ENCODE measurements at regions of chr7 and their contacts with region 1.

Region 1: GRCh38 chr7:43729214-43729923 is at the start of gene COA1:
- DNase-seq: peak; percentile 82
- ATAC-seq: peak; percentile 99
- H3K4me3 ChIP-seq: peak within 1 kb of the TSS; percentile 89 to 98 (median 95)
- H3K27ac ChIP-seq: peak within 1 kb of the TSS; percentile 89
- H3K4me1 ChIP-seq: peaks cover 28% of the 10 kb centered on the region
- H3K27me3 ChIP-seq: no peaks in the 10 kb centered on the region; a peak in 1 of 5 replicates
- CTCF ChIP-seq: no peak
- EP300 ChIP-seq: 0 out of 4 replicates have a peak, but pooled peaks of 1 of the 2 experiments have one; percentile 30
- POLR2A ChIP-seq: peak; percentile 84 to 86
- RAD21 ChIP-seq: peak; percentile 49; the same call in 1 of the 2 replicates
- total RNA-seq, gene COA1: 65.7 and 73.8 TPM in 2 replicates

Region 2: DNA sequence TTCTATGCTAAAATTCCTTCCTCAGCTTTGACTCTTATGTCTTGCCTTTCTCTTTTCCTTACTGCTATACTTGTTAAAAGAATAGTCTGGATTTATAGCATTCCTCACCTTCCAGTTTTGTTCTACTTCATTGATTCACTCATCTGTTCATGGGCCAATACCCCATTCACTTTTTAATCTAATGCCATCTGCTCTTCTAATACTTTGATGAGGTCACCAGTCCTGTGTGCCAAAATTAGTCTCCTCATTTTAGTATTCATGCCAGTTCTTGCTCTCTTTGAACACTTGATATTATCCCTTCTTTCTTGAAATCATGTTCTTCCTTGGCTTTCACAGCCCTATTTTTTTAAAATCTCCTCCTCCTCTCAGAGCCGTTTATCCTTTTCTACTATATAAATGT is 127.1 kb before region 1 on chr7:
- CTCF ChIA-PET with region 1: no interaction called
- POLR2A ChIA-PET with region 1: no interaction called
- in situ Hi-C with region 1: no loop called
- intact Hi-C with region 1: no loop called
- DNase-seq: no peak
- ATAC-seq: no peak
- H3K4me3 ChIP-seq: no peak overlapping the region
- H3K27ac ChIP-seq: no peak overlapping the region
- H3K4me1 ChIP-seq: no peaks in the 10 kb centered on the region
- H3K27me3 ChIP-seq: no peaks in the 10 kb centered on the region
- CTCF ChIP-seq: no peak
- EP300 ChIP-seq: no peak
- POLR2A ChIP-seq: no peak
- RAD21 ChIP-seq: no peak

Region 3: DNA sequence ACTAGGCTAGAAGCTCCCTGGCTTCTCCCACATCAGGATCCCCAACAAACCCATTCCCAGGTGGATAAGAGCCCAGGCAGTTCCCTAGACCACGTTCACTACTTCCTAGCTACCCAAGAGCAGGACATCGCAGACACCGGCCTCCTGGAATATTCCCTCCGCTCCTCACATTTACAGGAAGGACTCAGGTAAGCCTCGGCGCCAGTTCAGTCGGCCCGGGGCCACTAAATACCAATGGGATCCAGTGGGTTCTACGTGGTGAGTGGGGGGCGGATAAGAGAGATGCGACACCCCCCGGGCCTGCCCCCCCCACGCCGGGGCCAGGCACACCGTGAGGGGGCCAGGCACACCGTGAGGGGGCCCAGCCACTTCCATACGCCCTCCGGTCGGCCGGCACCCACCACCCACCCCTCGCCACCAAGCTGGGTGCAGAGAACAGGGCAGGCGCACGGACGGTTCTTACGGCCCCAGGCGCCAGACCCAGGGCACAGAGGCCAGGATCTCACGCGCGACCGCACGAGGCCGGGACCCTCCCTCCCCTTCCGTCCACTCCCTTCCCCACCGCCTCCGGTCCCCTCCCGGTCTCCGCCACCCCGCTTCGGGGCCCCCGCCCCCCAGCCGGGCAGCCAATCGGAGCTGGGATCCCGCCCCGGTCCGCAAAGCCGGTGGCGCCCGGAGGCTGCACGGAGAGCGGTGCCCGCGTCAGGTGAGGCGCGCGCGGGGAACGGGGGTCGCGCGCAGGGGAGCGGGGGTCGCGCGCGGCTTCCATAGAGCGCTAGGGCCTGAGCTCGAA is 28.9 kb after region 1 on chr7 and contains the start of gene BLVRA:
- CTCF ChIA-PET with region 1: no interaction called
- POLR2A ChIA-PET with region 1: interaction called, 11 read pairs
- in situ Hi-C with region 1: no loop called
- intact Hi-C with region 1: loop called (anchors 2 kb)
- DNase-seq: peak; percentile 37
- ATAC-seq: peak; percentile 88
- H3K4me3 ChIP-seq: peak within 1 kb of the TSS; percentile 75 to 91 (median 82)
- H3K27ac ChIP-seq: peak within 1 kb of the TSS; percentile 60
- H3K4me1 ChIP-seq: peaks cover 58% of the 10 kb centered on the region
- H3K27me3 ChIP-seq: no peaks in the 10 kb centered on the region; a peak in 1 of 5 replicates
- CTCF ChIP-seq: no peak
- EP300 ChIP-seq: no peak
- POLR2A ChIP-seq: peak; percentile 20 to 87; a peak in 2 of 4 replicates
- RAD21 ChIP-seq: no peak
- total RNA-seq, gene BLVRA: 64.2 and 95.5 TPM in 2 replicates

Region 4: GRCh38 chr7:43764039-43764761 is 34.8 kb after region 1 on chr7:
- CTCF ChIA-PET with region 1: no interaction called
- POLR2A ChIA-PET with region 1: interaction called, 17 read pairs
- in situ Hi-C with region 1: no loop called
- intact Hi-C with region 1: loop called (anchors 2 kb)
- DNase-seq: peak; percentile 58
- ATAC-seq: peak; percentile 70
- H3K4me3 ChIP-seq: peak overlapping the region in 2 of 3 experiments; percentile 45 to 47; a peak in 4 of 6 replicates
- H3K27ac ChIP-seq: peak overlapping the region; percentile 82
- H3K4me1 ChIP-seq: peaks cover 96% of the 10 kb centered on the region
- H3K27me3 ChIP-seq: no peaks in the 10 kb centered on the region; a peak in 1 of 5 replicates
- CTCF ChIP-seq: no peak
- EP300 ChIP-seq: no peak
- POLR2A ChIP-seq: no peak
- RAD21 ChIP-seq: no peak

Region 5: DNA sequence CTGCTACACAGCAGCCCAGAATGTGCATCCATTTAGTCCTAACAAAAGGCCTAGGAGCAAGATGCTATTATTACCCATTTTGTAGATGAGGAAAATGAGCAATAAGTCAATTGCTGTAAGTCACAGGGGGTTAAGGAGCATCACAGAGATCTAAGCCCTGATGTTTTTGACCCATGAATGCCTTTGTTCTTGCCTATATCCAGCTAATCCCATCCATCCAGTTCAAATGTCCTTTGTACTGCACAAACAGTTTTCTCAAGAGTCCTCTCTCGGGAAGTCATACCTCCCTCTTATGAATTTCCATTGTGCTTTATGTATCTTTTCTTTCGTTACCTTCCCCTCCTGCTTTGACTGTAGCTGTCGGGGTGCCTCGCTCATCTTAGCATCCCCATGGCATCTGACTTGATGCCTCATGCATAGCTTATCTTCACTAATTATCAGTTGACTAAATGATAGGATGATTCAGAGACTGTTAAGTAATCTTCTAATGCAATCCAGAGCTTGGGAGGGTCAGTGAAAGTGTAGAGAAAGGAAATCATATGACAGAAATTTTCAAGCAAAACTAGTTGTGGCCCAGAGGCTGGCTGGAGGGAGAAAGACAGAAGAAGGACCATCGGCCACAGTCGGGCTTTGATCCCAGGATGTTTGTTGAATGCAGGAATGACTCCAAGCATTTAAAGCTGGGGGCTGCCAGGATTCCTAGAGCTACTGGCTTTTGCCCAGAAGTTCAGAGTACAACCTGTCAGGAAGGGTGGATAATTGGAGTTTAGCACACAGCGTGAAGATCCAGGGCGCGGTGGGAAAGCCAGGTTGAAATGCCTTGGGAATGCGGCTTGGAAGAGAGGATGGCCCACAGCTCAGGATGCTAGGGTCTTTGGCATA is 52.6 kb after region 1 on chr7:
- CTCF ChIA-PET with region 1: no interaction called
- POLR2A ChIA-PET with region 1: interaction called, 10 read pairs
- in situ Hi-C with region 1: no loop called
- intact Hi-C with region 1: loop called (anchors 1 kb)
- DNase-seq: peak; percentile 90
- ATAC-seq: peak; percentile 92
- H3K4me3 ChIP-seq: peak overlapping the region in 2 of 3 experiments; percentile 4 to 18; a peak in 3 of 6 replicates
- H3K27ac ChIP-seq: peak overlapping the region; percentile 71
- H3K4me1 ChIP-seq: peaks cover 64% of the 10 kb centered on the region
- H3K27me3 ChIP-seq: no peaks in the 10 kb centered on the region
- CTCF ChIP-seq: no peak
- EP300 ChIP-seq: peak; percentile 61 to 85; a peak in 3 of 4 replicates
- POLR2A ChIP-seq: no peak
- RAD21 ChIP-seq: no peak

Region 6: DNA sequence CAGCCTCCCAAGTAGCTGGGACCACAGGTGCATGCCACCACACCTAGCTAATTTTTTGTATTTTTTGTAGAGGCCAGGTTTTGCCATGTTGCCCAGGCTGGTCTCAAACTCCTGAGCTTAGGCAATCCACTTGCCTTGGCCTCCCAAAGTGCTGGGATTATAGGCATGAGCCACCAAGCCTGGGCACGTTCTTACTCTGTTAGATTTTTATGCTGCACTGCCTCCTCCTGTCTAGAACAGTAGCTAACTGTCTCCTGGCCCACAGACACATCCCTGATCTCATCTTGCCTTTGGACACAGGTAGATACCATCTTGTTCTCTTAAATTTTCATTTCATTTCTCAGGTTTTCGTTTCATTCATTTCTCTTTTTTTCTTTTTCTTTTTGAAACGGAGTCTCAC is 70.2 kb after region 1 on chr7:
- CTCF ChIA-PET with region 1: no interaction called
- POLR2A ChIA-PET with region 1: no interaction called
- in situ Hi-C with region 1: no loop called
- intact Hi-C with region 1: loop called (anchors 2 kb)
- DNase-seq: peak; percentile 45
- ATAC-seq: peak; percentile 92
- H3K4me3 ChIP-seq: no peak overlapping the region
- H3K27ac ChIP-seq: no peak overlapping the region
- H3K4me1 ChIP-seq: no peaks in the 10 kb centered on the region
- H3K27me3 ChIP-seq: no peaks in the 10 kb centered on the region
- CTCF ChIP-seq: peak; percentile 71
- EP300 ChIP-seq: no peak
- POLR2A ChIP-seq: no peak
- RAD21 ChIP-seq: peak; percentile 78

Region 7: GRCh38 chr7:43808135-43808809 is 78.9 kb after region 1 on chr7:
- CTCF ChIA-PET with region 1: interaction called, 3 read pairs
- POLR2A ChIA-PET with region 1: no interaction called
- in situ Hi-C with region 1: no loop called
- intact Hi-C with region 1: loop called (anchors 1 kb)
- DNase-seq: no peak
- ATAC-seq: no peak
- H3K4me3 ChIP-seq: no peak overlapping the region
- H3K27ac ChIP-seq: no peak overlapping the region
- H3K4me1 ChIP-seq: no peaks in the 10 kb centered on the region
- H3K27me3 ChIP-seq: no peaks in the 10 kb centered on the region
- CTCF ChIP-seq: no peak
- EP300 ChIP-seq: no peak
- POLR2A ChIP-seq: no peak
- RAD21 ChIP-seq: no peak

Region 8: DNA sequence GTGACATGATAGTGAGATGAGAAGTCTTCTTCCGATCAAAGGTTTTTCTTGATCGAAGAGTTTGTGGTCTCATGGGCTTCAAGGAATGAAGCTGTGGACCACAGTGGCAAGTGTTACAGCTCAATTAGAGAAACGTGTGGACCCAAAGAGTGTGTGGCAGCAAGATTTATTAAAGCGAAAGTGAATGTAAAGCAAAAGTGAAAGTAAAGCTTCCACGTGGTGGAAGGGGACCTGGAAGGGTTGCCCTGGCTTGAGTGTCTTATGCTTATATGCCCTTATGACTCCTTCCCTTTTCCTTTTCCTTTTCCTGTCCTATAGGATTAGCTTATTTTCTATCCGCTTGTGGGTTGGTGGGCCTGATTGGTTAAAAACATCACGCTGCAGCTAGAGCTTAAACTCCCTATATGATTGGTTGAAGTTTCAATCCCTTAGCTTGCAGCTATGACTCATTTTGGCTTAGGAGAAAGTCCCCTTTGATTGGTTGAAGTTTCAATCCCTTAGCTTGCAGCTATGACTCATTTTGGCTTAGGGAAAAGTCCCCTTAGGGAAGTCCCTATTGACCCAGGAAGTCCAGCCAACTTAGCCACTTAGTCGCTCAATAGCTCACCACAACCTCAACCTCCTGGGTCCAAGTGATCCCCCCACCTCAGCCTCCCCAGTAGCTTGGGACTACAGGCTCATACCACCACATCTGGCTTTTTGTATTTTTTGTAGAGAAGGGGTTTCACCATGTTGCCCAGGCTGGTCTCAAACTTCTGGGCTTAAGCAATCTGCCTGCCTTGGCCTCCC is 105.3 kb after region 1 on chr7:
- CTCF ChIA-PET with region 1: interaction called, 14 read pairs
- POLR2A ChIA-PET with region 1: interaction called, 6 read pairs
- in situ Hi-C with region 1: no loop called
- intact Hi-C with region 1: loop called (anchors 2 kb)
- DNase-seq: no peak
- ATAC-seq: no peak
- H3K4me3 ChIP-seq: peak overlapping the region in 2 of 3 experiments; percentile 8 to 40; a peak in 4 of 6 replicates
- H3K27ac ChIP-seq: no peak overlapping the region
- H3K4me1 ChIP-seq: peaks cover 23% of the 10 kb centered on the region
- H3K27me3 ChIP-seq: no peaks in the 10 kb centered on the region
- CTCF ChIP-seq: no peak
- EP300 ChIP-seq: no peak
- POLR2A ChIP-seq: no peak
- RAD21 ChIP-seq: no peak

Region 9: DNA sequence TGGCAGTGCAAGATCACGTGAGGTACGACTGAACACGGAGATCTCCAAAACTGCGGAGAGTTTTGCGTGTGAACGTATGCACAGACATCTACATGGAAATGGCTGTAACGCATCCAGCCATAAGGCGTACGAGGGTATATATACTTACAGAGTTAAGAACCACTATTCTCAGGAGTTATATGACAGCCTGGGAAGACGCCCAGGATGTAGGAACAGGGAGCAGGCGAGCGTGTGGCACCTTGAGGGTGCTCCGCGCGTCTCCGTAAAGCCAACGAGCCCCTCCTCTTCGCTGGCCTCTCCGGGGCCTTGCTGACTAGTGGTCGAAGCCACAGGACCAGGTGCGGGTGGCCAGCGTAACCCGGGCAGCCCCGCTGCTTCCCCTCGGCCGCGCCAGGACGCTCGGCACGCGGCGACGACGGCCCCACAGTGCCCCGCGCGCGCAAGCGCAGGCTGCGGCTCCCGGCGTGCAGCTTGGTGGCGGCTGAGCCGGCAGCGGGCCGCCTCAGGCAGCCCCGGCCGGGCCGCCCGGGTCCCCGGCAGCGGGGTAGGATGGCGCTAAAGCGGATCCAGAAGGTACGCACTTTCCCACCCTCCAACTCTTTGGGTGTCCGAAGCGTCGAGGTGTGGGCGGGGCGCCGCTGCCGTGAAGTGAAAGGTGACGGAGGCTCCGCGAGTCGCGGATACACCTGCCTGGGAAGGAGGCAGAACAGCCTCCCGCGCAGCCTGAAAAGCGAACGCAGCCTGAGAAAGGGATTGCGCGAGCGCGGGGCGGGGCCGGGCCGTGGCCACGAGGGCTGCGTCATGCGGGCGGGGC is 196.8 kb after region 1 on chr7 and contains the start of gene UBE2D4:
- CTCF ChIA-PET with region 1: no interaction called
- POLR2A ChIA-PET with region 1: no interaction called
- in situ Hi-C with region 1: no loop called
- intact Hi-C with region 1: no loop called
- DNase-seq: peak; percentile 67
- ATAC-seq: peak; percentile 97
- H3K4me3 ChIP-seq: peak within 1 kb of the TSS; percentile 44 to 64 (median 64)
- H3K27ac ChIP-seq: peak within 1 kb of the TSS; percentile 84
- H3K4me1 ChIP-seq: peaks cover 26% of the 10 kb centered on the region
- H3K27me3 ChIP-seq: no peaks in the 10 kb centered on the region
- CTCF ChIP-seq: 0 out of 2 replicates have a peak, but pooled peaks have one; percentile 49
- EP300 ChIP-seq: 0 out of 4 replicates have a peak, but pooled peaks of 1 of the 2 experiments have one; percentile 24
- POLR2A ChIP-seq: peak; percentile 95 to 96
- RAD21 ChIP-seq: 0 out of 2 replicates have a peak, but pooled peaks have one; percentile 46
- total RNA-seq, gene UBE2D4: 9.9 and 11.2 TPM in 2 replicates

Measured in HepG2 (cell line).